ENCODE measurements at regions of chr1 and their contacts with region 1.

Region 1: DNA sequence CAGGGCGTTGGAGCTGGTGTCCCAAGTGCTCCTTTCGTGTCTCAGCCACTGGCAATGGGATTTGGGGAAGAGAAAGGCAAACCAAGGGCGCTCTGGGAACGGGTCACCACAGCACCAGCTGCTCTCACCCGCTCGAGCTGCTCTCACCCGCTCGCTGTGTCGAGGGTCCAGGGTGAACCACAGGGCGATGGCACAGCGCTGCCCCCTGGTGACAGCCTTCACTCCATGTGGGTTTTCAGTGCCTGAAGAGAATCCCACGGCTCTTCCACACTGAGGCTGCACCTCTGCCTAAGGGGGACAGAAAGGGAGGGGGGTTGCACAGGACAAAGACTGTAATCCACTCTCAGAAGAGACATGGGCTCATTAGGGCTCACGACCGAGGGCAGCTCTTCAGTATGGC is 7.1 kb upstream of the CLDN19 start:
- ATAC-seq: peak in 7 of 8 experiments; percentile 22 to 87 (median 79)
- H3K4me3 ChIP-seq: no peak overlapping the region
- H3K27ac ChIP-seq: no peak overlapping the region
- H3K4me1 ChIP-seq: peaks cover 0 to 2% of the 10 kb centered on the region in 2 donors

Region 2: GRCh38 chr1:42335050-42335808 is 411.9 kb before region 1 on chr1 and contains the start of gene FOXJ3:
- in situ Hi-C with region 1: loop called in 1 of 9 experiments (anchors 25 kb)
- ATAC-seq: peak; percentile 77 to 87 (median 81)
- H3K4me3 ChIP-seq: peak within 1 kb of the TSS; percentile 83 to 97 (median 94)
- H3K27ac ChIP-seq: peak within 1 kb of the TSS; percentile 95 to 98
- H3K4me1 ChIP-seq: peaks cover 28 to 31% of the 10 kb centered on the region in 2 donors
- total RNA-seq, gene FOXJ3: 17.8 to 42.4 (median 32.2) TPM

Region 3: DNA sequence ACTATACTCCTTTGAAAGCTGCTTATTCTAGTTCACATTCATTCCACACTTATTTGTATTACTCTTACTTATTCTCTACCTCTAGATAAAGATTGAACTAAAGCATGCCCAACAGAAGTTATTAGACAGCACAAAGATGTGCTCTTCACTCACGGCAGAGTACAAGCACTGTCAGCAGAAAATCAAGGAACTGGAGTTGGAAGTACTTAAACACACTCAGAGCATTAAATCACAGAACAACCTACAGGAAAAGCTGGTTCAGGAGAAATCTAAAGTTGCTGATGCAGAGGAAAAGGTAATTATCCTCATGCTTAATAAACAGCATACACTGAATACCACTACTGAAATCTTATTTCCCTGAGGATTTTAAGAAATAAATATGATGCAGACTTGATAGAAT is 170.2 kb before region 1 on chr1:
- in situ Hi-C with region 1: loop called in 2 of 9 experiments (anchors 5 to 25 kb)
- ATAC-seq: no peak
- H3K4me3 ChIP-seq: no peak overlapping the region
- H3K27ac ChIP-seq: no peak overlapping the region
- H3K4me1 ChIP-seq: no peaks in the 10 kb centered on the region

Region 4: GRCh38 chr1:42593486-42594100 is 153.5 kb before region 1 on chr1:
- in situ Hi-C with region 1: loop called in 1 of 9 experiments (anchors 25 kb)
- ATAC-seq: no peak
- H3K4me3 ChIP-seq: no peak overlapping the region
- H3K27ac ChIP-seq: no peak overlapping the region
- H3K4me1 ChIP-seq: no peaks in the 10 kb centered on the region

Measured in motor neuron (in vitro differentiated cells).